IMR-90 (cell line): ENCODE measurements at regions of chr5 and their contacts with region 1.

Region 1: DNA sequence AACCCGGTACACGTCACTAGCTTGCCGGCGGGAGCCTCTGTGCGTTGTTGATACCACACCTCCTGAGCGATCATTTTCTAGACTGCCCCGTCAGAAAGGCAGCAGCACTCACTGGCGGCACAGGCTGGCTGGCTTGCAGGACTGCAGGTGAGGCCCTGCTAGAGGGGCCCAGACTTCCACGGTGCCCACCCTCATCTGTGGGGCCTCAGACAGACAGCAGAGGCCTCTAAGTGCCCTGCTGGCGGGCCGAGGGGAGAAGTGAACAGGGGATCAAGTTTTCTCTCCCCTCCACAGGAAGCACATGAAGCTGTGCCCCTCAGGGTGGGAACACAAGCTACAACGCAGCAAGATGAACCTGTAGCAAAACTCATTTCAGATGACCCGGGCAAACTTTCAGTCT is 39.0 kb upstream of the RASGEF1C start:
- DNase-seq: no peak
- ATAC-seq: no peak
- H3K4me3 ChIP-seq: no peak overlapping the region
- H3K27ac ChIP-seq: no peak overlapping the region
- H3K4me1 ChIP-seq: no peaks in the 10 kb centered on the region
- H3K27me3 ChIP-seq: no peaks in the 10 kb centered on the region
- CTCF ChIP-seq: no peak
- POLR2A ChIP-seq: no peak
- RAD21 ChIP-seq: no peak

Region 2: GRCh38 chr5:180284149-180284548 is 36.1 kb after region 1 on chr5:
- CTCF ChIA-PET with region 1: interaction called, 9 read pairs
- POLR2A ChIA-PET with region 1: no interaction called
- dilution Hi-C with region 1: no loop called
- in situ Hi-C with region 1: no loop called
- intact Hi-C with region 1: loop called (anchors 5 kb)
- DNase-seq: no peak
- ATAC-seq: no peak
- H3K4me3 ChIP-seq: no peak overlapping the region
- H3K27ac ChIP-seq: no peak overlapping the region
- H3K4me1 ChIP-seq: peaks cover 3% of the 10 kb centered on the region; the same call in 1 of the 2 replicates
- H3K27me3 ChIP-seq: no peaks in the 10 kb centered on the region
- CTCF ChIP-seq: no peak
- POLR2A ChIP-seq: no peak
- RAD21 ChIP-seq: no peak